ENCODE measurements at regions of chr14 and their contacts with region 1.

Region 1: GRCh38 chr14:72516936-72517700 is 376.8 kb downstream of the DPF3 start:
- DNase-seq: peak; percentile 84
- ATAC-seq: peak; percentile 56
- H3K4me3 Mint-ChIP-seq: no peak overlapping the region
- H3K27ac Mint-ChIP-seq: no peak overlapping the region
- H3K4me1 Mint-ChIP-seq: peaks cover 48% of the 10 kb centered on the region
- H3K27me3 Mint-ChIP-seq: peaks cover 2% of the 10 kb centered on the region
- CTCF ChIP-seq: peak; percentile 79

Region 2: DNA sequence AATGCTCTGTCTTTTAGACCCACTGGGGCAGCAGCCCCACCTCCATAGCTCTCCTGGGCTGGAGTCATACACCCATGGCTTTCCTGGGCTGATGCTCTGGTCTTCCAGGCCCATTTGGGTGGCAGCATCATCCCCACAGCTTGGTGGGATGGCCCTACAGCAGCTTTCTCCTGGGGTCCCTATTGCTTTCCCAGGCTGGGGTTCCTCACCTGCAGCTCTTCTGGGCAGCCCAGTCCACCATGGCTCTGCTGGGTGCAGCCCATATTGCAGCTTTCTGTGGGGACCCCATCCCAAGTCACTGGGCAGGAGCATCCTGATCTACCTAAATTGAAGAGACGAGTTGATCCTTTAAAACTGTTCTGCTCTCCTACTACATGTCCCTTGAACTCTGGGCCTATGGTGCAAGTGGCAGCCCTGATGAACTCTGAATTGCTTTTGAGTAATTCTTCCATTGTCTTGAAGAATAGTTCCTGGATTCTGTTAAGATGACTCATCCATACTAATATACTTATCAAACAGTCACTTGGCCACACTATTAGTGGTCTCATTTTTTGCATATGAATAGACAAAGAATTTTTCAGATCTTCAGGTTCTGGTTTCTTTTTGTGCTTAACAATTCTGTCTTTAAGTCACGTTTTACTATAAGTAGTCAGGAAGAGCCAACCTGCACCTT is 13.3 kb before region 1 on chr14:
- CTCF ChIA-PET with region 1: interaction called, 21 read pairs
- POLR2A ChIA-PET with region 1: interaction called, 4 read pairs
- intact Hi-C with region 1: no loop called
- DNase-seq: no peak
- ATAC-seq: no peak
- H3K4me3 Mint-ChIP-seq: no peak overlapping the region
- H3K27ac Mint-ChIP-seq: no peak overlapping the region
- H3K4me1 Mint-ChIP-seq: no peaks in the 10 kb centered on the region
- H3K27me3 Mint-ChIP-seq: peaks cover 3% of the 10 kb centered on the region
- CTCF ChIP-seq: no peak

Region 3: DNA sequence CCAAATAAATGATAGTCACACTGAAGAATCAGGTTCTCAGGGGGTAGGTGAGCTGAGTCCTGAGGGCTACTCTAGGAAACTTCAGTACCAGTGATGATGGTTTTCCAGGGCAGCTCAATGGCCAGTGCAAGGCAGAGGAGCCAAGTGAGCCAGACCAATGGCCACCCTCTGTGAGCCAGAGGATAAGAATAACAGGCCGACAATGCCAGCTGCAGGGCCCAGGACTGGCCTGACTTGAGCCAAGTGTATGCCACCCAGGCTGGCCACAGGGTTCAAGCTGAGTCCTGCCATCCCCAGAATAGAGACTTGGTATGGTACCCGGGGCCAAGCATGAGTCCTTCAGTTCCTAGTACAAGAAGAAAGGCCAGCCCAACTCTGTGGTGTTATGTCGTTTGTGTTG is 21.3 kb after region 1 on chr14:
- CTCF ChIA-PET with region 1: no interaction called
- POLR2A ChIA-PET with region 1: no interaction called
- intact Hi-C with region 1: no loop called
- DNase-seq: no peak
- ATAC-seq: no peak
- H3K4me3 Mint-ChIP-seq: no peak overlapping the region
- H3K27ac Mint-ChIP-seq: no peak overlapping the region
- H3K4me1 Mint-ChIP-seq: peaks cover 21% of the 10 kb centered on the region
- H3K27me3 Mint-ChIP-seq: no peaks in the 10 kb centered on the region
- CTCF ChIP-seq: no peak

Region 4: DNA sequence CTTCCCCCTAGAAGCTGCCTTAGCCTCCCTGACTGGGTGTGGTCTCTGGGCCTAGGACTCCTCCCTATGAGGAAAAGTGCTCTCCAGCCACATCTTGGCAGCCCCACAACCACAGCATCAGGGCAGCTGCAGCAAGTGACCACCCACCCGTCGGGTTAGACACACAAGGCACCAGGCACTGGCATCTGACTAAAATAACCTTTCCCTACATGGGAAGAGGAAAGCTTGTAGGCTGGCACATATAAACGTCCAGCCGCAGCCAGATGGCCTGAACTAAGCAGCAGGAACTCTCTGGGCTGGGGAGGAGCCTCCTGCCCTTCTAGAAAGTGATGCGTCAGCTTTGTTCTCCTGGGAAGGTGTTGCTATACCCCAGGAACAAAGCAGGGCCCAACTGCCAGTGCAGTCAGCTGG is 48.0 kb after region 1 on chr14:
- CTCF ChIA-PET with region 1: no interaction called
- POLR2A ChIA-PET with region 1: no interaction called
- intact Hi-C with region 1: no loop called
- DNase-seq: no peak
- ATAC-seq: no peak
- H3K4me3 Mint-ChIP-seq: no peak overlapping the region
- H3K27ac Mint-ChIP-seq: no peak overlapping the region
- H3K4me1 Mint-ChIP-seq: peaks cover 2% of the 10 kb centered on the region
- H3K27me3 Mint-ChIP-seq: no peaks in the 10 kb centered on the region
- CTCF ChIP-seq: no peak

Region 5: DNA sequence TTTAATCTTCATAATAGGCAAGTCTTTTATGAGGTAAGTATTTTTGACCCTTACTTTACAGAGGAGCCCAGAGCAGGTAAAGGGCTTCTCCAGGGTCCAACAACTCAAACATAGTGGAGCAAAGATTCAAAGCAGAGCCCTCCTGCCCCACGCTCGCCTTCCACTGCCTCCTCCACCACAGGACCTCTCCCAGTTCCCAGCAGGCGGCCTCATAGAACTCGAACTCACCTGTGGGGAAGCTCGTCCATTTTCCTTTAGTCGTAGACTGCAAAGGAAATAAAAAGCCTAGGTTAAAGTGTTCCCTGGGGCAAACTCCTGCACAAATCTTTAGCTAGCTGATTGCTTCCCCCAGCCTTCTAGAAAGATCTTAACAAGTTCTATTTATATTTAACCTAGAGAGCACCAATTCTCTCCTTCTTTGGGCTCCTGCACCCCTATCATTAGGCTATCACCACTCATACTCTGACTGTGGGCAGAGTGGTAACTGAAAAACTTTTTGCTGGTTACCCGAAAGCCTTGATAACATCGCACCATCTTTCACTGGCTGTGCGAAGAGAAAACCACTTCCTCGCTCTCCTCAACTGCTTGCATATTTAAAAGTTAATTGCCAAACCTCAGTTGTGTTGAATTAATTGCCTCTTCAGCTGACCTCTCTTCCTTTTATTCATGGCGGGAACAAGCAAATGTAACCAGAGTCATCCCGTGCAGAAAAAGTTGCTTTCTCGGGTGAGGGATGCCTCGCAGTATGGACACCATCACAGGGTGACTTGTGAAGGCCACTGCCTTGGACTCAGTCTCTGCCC is 77.2 kb after region 1 on chr14:
- CTCF ChIA-PET with region 1: interaction called, 4 read pairs
- POLR2A ChIA-PET with region 1: no interaction called
- intact Hi-C with region 1: loop called (anchors 5 kb)
- DNase-seq: peak; percentile 73
- ATAC-seq: peak; percentile 93
- H3K4me3 Mint-ChIP-seq: no peak overlapping the region
- H3K27ac Mint-ChIP-seq: peak overlapping the region; percentile 7
- H3K4me1 Mint-ChIP-seq: peaks cover 44% of the 10 kb centered on the region
- H3K27me3 Mint-ChIP-seq: peaks cover 42% of the 10 kb centered on the region
- CTCF ChIP-seq: no peak

Region 6: DNA sequence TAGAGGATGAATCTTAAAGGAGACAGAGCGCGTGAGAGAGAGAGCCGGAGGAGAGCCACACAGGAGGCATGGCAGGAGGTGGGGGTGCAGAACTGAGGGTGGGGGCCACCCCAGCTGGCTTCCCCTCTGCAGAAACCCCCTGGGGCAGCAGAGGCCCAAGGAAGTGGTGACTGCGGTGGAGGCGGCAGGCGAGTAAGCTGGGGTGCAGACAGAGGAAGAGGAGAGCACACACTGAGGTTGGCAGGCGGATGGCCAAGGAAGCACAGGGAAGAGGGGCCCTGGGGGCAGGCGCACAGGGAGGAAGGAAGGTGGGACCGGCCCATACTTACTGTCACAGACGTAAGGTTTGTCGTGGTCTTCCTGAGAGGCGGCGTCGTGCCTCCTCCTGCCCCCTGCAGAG is 197.0 kb after region 1 on chr14:
- CTCF ChIA-PET with region 1: no interaction called
- POLR2A ChIA-PET with region 1: no interaction called
- intact Hi-C with region 1: loop called (anchors 10 kb)
- DNase-seq: peak; percentile 84
- ATAC-seq: peak; percentile 88
- H3K4me3 Mint-ChIP-seq: peak overlapping the region; percentile 0
- H3K27ac Mint-ChIP-seq: peak overlapping the region; percentile 0
- H3K4me1 Mint-ChIP-seq: peaks cover 33% of the 10 kb centered on the region
- H3K27me3 Mint-ChIP-seq: no peaks in the 10 kb centered on the region
- CTCF ChIP-seq: no peak

Region 7: GRCh38 chr14:72904840-72905561 is 387.9 kb after region 1 on chr14:
- CTCF ChIA-PET with region 1: interaction called, 164 read pairs
- POLR2A ChIA-PET with region 1: interaction called, 3 read pairs
- intact Hi-C with region 1: loop called (anchors 1 kb)
- DNase-seq: peak; percentile 72
- ATAC-seq: peak; percentile 74
- H3K4me3 Mint-ChIP-seq: no peak overlapping the region
- H3K27ac Mint-ChIP-seq: no peak overlapping the region
- H3K4me1 Mint-ChIP-seq: no peaks in the 10 kb centered on the region
- H3K27me3 Mint-ChIP-seq: peaks cover 10% of the 10 kb centered on the region
- CTCF ChIP-seq: peak; percentile 95

Region 8: DNA sequence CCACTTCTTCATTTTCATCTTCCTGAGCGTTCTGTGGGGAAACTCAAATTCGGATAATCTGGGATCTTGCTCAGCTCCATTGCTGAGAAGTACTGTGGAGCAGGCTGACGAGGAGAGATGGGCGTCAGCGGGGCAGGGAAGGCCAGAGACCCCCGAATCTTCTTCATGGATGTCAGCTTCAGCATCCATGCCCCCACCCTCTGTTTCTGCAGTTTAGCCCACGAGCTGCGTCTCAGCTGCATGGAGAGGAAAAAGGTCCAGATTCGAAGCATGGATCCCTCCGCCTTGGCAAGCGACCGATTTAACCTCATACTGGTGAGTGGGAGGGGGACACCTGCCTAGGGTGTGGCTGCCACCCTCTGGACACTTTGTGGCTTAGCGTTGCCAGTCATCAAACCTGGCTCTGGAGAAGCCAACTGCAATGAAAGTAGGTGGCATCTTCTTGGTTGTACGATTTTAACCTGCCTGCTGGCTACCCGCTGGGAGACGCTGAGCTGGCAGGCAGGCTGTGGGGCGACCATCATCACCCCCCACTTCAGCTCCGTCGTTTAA is 425.7 kb after region 1 on chr14:
- CTCF ChIA-PET with region 1: interaction called, 81 read pairs
- POLR2A ChIA-PET with region 1: no interaction called
- intact Hi-C with region 1: no loop called
- DNase-seq: no peak
- ATAC-seq: no peak
- H3K4me3 Mint-ChIP-seq: no peak overlapping the region
- H3K27ac Mint-ChIP-seq: no peak overlapping the region
- H3K4me1 Mint-ChIP-seq: peaks cover 12% of the 10 kb centered on the region
- H3K27me3 Mint-ChIP-seq: no peaks in the 10 kb centered on the region
- CTCF ChIP-seq: no peak

Region 9: DNA sequence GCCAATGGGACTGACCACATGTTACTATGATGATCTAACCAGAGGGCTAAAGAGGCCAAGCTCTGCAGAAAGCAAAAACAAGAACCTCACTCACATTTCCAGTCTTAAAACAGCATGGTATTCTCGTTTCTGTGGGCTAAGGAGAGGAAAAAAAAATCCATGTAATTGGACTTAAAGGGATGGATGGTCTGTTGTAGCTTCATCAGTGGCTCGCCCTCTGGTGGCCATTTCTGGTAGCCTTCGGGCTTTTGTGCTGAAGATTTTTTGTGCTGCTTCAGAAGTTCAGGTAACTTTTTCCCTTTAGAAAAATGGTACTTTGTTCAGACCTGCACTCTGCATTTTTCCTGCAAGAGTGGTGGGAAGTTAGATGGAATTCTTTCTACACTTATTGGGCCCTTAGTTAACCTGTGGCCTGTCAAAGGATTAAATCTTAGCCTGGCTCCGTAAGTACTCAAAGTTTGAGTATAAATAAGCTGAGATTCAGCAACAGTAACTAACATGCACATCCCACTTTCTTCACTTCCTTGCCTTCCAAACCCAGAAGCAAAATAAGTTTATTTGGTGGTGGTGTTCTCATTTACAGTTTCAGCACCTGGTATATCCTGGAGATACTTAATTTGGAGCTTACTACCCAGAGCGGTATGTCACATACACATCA is 431.5 kb after region 1 on chr14:
- CTCF ChIA-PET with region 1: interaction called, 81 read pairs
- POLR2A ChIA-PET with region 1: no interaction called
- intact Hi-C with region 1: no loop called
- DNase-seq: peak; percentile 85
- ATAC-seq: no peak
- H3K4me3 Mint-ChIP-seq: no peak overlapping the region
- H3K27ac Mint-ChIP-seq: no peak overlapping the region
- H3K4me1 Mint-ChIP-seq: peaks cover 14% of the 10 kb centered on the region
- H3K27me3 Mint-ChIP-seq: no peaks in the 10 kb centered on the region
- CTCF ChIP-seq: peak; percentile 91